ENCODE measurements at regions of chr4 and their contacts with region 1.

Region 1: GRCh38 chr4:72505314-72505744 is 63.7 kb downstream of the ADAMTS3 start:
- DNase-seq: peak; percentile 52
- H3K4me3 ChIP-seq: no peak overlapping the region
- H3K27ac ChIP-seq: no peak overlapping the region
- H3K4me1 ChIP-seq: no peaks in the 10 kb centered on the region
- H3K27me3 ChIP-seq: peaks cover 0 to 3% of the 10 kb centered on the region in 2 experiments
- CTCF ChIP-seq: peak; percentile 58 to 75
- POLR2A ChIP-seq: no peak

Region 2: DNA sequence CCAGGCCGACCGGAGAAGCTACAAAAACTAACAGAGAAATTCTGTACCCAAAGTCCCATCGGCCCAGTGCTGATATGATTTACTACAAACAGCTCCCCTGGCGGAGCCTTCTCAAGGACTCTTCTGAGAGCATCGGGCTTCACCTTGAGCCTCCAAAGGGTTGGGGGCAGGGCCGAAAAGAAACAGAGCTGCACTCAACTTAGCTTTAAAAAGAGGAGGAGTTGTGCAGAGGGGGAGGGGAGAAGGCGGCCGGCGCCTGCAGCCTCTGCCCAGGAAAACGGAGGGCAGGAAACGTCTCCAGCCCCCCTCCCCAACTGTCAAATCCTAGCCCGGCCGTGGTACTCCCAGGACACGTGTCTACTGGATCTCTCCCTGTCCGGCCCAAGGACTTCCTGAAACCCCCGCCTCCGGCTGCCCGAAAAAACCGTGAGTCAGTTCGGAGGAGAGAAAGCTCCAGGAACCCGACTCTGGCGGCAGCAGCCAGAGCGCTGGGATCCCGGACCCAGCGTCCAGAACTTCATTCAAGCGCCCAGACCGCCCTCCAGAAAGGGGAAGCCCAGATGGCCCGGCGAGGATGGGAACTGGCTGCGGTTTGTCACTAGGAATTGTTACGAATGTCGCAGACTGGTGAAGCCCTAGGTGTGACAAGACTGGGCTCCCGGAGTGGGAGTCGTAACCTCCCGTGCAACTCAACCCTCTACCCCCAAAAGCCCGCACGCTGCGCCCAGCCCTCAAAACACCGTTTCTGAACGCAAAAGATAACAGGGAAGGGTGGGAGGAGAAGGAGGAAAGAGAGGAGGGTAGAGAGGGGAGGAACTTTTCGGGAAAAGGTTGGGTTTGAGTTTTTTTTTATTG is 62.7 kb after region 1 on chr4:
- CTCF ChIA-PET with region 1: interaction called, 13 read pairs
- POLR2A ChIA-PET with region 1: no interaction called
- dilution Hi-C with region 1: no loop called
- intact Hi-C with region 1: no loop called
- DNase-seq: peak; percentile 54
- H3K4me3 ChIP-seq: peak overlapping the region; percentile 74 to 91 (median 86)
- H3K27ac ChIP-seq: peak overlapping the region; percentile 16
- H3K4me1 ChIP-seq: peaks cover 24% of the 10 kb centered on the region
- H3K27me3 ChIP-seq: no peaks in the 10 kb centered on the region
- CTCF ChIP-seq: peak; percentile 19 to 23
- POLR2A ChIP-seq: no peak

Region 3: GRCh38 chr4:72701987-72702819 is 196.9 kb after region 1 on chr4:
- CTCF ChIA-PET with region 1: interaction called, 9 read pairs
- POLR2A ChIA-PET with region 1: no interaction called
- dilution Hi-C with region 1: no loop called
- intact Hi-C with region 1: loop called (anchors 1 kb)
- DNase-seq: peak; percentile 69
- H3K4me3 ChIP-seq: peak overlapping the region; percentile 30 to 85 (median 73)
- H3K27ac ChIP-seq: peak overlapping the region; percentile 1
- H3K4me1 ChIP-seq: no peaks in the 10 kb centered on the region
- H3K27me3 ChIP-seq: no peaks in the 10 kb centered on the region
- CTCF ChIP-seq: peak; percentile 30 to 47
- POLR2A ChIP-seq: no peak

Region 4: DNA sequence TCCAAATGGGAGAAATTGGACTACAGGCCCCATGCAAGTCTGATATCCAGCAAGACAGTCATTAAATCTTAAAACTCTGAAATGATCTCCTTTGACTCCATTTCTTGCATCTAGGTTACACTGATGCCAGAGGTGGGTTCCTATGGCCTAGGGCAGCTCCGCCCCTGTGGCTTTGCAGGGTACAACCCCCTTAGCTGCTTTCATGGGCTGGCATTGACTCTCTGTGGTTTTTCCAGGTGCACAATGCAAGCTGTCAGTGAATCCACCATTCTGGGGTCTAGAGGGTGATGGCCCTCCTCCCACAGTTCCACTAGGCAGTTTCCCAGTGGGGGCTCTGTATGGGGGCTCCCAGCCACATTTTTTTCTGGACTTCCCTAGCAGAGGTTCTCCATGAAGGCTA is 292.2 kb after region 1 on chr4:
- CTCF ChIA-PET with region 1: no interaction called
- POLR2A ChIA-PET with region 1: no interaction called
- dilution Hi-C with region 1: no loop called
- intact Hi-C with region 1: no loop called
- DNase-seq: no peak
- H3K4me3 ChIP-seq: no peak overlapping the region
- H3K27ac ChIP-seq: no peak overlapping the region
- H3K4me1 ChIP-seq: no peaks in the 10 kb centered on the region
- H3K27me3 ChIP-seq: no peaks in the 10 kb centered on the region
- CTCF ChIP-seq: no peak
- POLR2A ChIP-seq: no peak

Region 5: GRCh38 chr4:72886602-72887001 is 381.3 kb after region 1 on chr4:
- CTCF ChIA-PET with region 1: interaction called, 21 read pairs
- POLR2A ChIA-PET with region 1: no interaction called
- dilution Hi-C with region 1: no loop called
- intact Hi-C with region 1: loop called (anchors 1 kb)
- DNase-seq: peak; percentile 21
- H3K4me3 ChIP-seq: no peak overlapping the region
- H3K27ac ChIP-seq: no peak overlapping the region
- H3K4me1 ChIP-seq: no peaks in the 10 kb centered on the region
- H3K27me3 ChIP-seq: no peaks in the 10 kb centered on the region
- CTCF ChIP-seq: peak; percentile 4 to 25
- POLR2A ChIP-seq: no peak

Measured in endothelial cell of umbilical vein (primary cell).